ENCODE measurements at regions of chr2 and their contacts with region 1.

Region 1: GRCh38 chr2:105398699-105399432 is at the start of gene FHL2:
- DNase-seq: peak; percentile 94
- H3K4me3 ChIP-seq: peak within 1 kb of the TSS; percentile 89 to 95
- H3K27ac ChIP-seq: peak within 1 kb of the TSS in 1 of 2 experiments; percentile 87; a peak in 3 of 4 replicates
- H3K4me1 ChIP-seq: peaks cover 4 to 6% of the 10 kb centered on the region in 2 experiments
- H3K27me3 ChIP-seq: no peaks in the 10 kb centered on the region
- CTCF ChIP-seq: peak; percentile 48
- EP300 ChIP-seq: no peak
- RAD21 ChIP-seq: peak; percentile 20; the same call in 1 of the 2 replicates
- polyA plus RNA-seq, gene FHL2: 31.7 and 33.1 TPM in 2 replicates

Region 2: GRCh38 chr2:105409717-105410116 is 10.9 kb after region 1 on chr2:
- CTCF ChIA-PET with region 1: interaction called, 21 read pairs
- POLR2A ChIA-PET with region 1: interaction called, 3 read pairs
- DNase-seq: no peak
- H3K4me3 ChIP-seq: no peak overlapping the region
- H3K27ac ChIP-seq: peak overlapping the region in 1 of 2 experiments; percentile 76; a peak in 2 of 4 replicates
- H3K4me1 ChIP-seq: peaks cover 4 to 19% of the 10 kb centered on the region in 2 experiments; a peak in 3 of 4 replicates
- H3K27me3 ChIP-seq: no peaks in the 10 kb centered on the region
- CTCF ChIP-seq: no peak
- EP300 ChIP-seq: peak in 1 of 2 experiments; percentile 54; a peak in 1 of 4 replicates
- RAD21 ChIP-seq: no peak